Activated T-helper 1 cell treated with anti-CD3 and anti-CD28 coated beads, Interleukin-12 subunit alpha, Interleukin-12 subunit beta, Interleukin-2, Interleukin-4 antibody, amounts not matched to agents 30 ng/mL and 10 ng/mL and 1 ng/mL, durations not matched to agents 14 hours and 24 hours and 36 hours (primary cell): ENCODE measurements at regions of chr15 and their contacts with region 1.

Region 1: DNA sequence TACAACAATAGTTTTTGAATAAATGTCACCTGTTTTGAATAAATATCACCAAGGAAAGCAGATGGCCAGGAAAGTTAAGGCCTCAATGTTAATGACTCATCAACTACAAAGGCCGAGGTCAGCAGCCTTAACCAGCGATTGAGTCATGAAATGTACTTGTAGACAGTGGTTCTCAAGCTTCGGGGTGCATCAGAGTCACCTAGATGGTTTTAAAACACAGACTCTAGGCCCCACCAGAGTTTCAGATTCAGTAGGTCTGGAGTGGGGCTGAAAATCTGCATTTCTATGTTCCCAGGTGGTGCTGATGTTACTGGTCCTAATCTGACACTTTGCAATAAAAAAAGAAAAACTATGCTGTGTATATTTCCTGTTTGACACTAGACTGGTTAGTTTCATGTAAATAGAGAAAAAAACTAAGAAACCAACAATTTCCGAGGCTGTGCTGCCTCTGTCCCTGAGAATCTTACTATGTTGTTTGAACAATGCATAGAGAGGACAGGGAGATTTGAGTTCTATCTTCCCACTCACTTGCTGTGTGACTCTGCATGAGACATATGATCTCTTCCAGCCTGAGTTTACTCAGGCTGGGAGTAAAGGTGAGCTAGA is 9.8 kb downstream of the RAB27A start:
- DNase-seq: peak; percentile 47
- H3K4me3 Mint-ChIP-seq: peak overlapping the region; percentile 57
- H3K27ac Mint-ChIP-seq: peak overlapping the region; percentile 99
- H3K4me1 Mint-ChIP-seq: peaks cover 92% of the 10 kb centered on the region
- H3K27me3 Mint-ChIP-seq: no peaks in the 10 kb centered on the region

Region 2: DNA sequence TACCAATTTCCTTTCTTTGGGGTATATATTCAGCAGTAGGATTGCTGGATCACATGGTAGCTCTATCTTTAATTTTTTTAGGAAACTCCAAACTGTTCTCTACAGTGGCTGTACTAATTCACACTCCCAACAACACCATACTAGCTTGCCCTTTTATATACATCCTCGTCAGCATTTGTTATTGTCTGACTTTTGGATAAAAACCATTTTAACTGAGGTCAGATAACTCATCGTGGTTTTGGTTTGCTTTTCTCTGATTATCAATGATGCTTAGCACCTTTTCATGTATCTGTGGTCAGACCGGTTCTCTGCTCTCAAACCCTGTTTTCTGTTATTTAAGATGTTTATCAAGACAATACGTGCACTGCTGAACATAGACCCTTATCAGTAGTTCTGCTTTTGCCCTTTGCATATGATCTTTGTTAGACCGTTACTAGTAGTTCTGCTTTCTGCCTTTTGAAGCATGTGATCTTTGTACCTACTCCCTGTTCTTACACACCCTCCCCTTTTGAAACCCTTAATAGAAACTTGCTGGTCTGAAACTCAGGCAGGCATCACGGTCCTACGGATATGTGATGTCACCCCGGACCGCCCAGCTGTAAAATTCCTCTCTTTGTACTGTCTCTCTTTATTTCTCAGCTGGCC is 557.4 kb before region 1 on chr15:
- intact Hi-C with region 1: no loop called
- DNase-seq: no peak
- H3K4me3 Mint-ChIP-seq: no peak overlapping the region
- H3K27ac Mint-ChIP-seq: no peak overlapping the region
- H3K4me1 Mint-ChIP-seq: no peaks in the 10 kb centered on the region
- H3K27me3 Mint-ChIP-seq: no peaks in the 10 kb centered on the region

Region 3: DNA sequence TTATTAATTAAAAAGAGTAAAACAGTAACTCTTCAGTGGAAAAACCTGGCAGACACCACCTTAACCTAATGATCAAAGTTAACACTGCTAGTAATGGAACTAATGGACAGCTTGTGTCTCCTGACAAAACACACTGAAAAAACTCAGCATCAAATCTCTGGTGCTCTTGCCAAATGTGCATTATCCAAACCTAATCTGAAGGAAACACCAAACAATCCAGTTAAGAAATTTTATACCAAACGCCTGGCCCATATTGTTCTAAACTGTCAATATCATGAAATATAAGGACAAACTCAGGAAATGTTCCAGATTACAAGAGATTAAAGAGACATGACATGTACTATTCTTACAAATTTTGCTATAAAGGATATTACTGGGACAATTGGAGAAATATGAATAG is 93.5 kb before region 1 on chr15:
- intact Hi-C with region 1: no loop called
- DNase-seq: no peak
- H3K4me3 Mint-ChIP-seq: no peak overlapping the region
- H3K27ac Mint-ChIP-seq: no peak overlapping the region
- H3K4me1 Mint-ChIP-seq: peaks cover 51% of the 10 kb centered on the region
- H3K27me3 Mint-ChIP-seq: no peaks in the 10 kb centered on the region

Region 4: GRCh38 chr15:55241891-55242290 is 38.0 kb before region 1 on chr15:
- intact Hi-C with region 1: loop called (anchors 1 kb)
- DNase-seq: no peak
- H3K4me3 Mint-ChIP-seq: no peak overlapping the region
- H3K27ac Mint-ChIP-seq: peak overlapping the region; percentile 41
- H3K4me1 Mint-ChIP-seq: peaks cover 76% of the 10 kb centered on the region
- H3K27me3 Mint-ChIP-seq: no peaks in the 10 kb centered on the region

Region 5: DNA sequence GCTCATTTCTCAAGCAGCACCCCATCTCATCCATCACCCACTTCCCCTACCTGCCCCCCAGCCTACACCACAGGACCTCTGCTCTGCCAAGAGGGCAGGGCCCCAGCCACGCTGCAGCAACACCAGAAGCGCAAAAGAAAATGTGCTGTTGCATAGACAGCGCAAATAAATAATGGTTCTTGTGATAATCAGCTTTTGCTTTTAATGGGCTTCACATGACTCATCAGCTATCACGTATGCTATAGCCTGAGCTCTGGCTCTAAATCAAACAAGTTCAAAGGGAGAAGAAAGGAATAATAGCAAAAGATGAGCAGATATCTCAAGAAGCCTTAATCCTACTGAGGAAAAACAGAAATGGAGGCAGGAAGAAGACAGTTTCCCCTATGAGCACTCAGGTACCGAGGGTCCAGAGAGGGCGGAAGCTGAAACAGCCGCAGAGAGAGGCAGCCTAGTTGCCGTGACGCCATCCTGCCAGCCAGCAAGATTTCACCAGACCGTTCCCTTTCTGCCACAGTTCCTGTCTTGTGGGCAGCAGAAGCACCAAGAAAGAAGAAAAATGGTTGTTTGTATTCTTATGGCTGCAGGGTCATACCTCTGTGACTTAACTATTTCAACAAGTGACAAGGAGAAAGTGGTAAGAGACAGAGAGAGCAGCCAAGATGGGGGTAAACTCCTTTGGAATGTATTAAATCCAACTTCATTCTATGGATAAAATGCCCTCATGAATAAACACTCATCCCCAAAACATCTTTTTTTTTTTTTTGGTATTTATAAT is 12.3 kb before region 1 on chr15:
- intact Hi-C with region 1: loop called (anchors 1 kb)
- DNase-seq: peak; percentile 57
- H3K4me3 Mint-ChIP-seq: peak overlapping the region; percentile 72
- H3K27ac Mint-ChIP-seq: peak overlapping the region; percentile 96
- H3K4me1 Mint-ChIP-seq: peaks cover 78% of the 10 kb centered on the region
- H3K27me3 Mint-ChIP-seq: no peaks in the 10 kb centered on the region